Lower leg skin (tissue), 4 donors: ENCODE measurements at regions of chr7 and their contacts with region 1.

Region 1: DNA sequence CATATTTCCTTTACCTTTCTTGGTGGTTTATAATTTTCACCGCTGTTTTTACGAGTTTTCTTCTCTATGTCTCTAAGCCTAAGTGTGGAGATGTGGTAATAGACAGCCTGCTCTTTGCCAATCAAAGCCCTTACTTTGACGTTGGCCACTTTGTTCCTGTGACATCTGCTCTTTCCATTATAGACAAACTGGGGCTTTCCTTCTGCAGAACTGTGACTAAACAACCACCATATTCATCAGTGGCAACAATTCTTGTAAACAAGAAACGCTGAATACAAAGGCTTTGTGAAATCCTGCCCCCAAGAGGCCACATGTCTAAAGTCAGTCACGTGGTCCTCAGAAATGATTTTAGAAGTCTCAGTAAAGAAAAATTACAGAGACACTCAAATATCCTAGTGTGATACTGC is 59.6 kb upstream of the CAPZA2 start:
- DNase-seq: no peak
- H3K4me3 ChIP-seq: no peak overlapping the region
- CTCF ChIP-seq: no peak
- POLR2A ChIP-seq: no peak

Region 2: DNA sequence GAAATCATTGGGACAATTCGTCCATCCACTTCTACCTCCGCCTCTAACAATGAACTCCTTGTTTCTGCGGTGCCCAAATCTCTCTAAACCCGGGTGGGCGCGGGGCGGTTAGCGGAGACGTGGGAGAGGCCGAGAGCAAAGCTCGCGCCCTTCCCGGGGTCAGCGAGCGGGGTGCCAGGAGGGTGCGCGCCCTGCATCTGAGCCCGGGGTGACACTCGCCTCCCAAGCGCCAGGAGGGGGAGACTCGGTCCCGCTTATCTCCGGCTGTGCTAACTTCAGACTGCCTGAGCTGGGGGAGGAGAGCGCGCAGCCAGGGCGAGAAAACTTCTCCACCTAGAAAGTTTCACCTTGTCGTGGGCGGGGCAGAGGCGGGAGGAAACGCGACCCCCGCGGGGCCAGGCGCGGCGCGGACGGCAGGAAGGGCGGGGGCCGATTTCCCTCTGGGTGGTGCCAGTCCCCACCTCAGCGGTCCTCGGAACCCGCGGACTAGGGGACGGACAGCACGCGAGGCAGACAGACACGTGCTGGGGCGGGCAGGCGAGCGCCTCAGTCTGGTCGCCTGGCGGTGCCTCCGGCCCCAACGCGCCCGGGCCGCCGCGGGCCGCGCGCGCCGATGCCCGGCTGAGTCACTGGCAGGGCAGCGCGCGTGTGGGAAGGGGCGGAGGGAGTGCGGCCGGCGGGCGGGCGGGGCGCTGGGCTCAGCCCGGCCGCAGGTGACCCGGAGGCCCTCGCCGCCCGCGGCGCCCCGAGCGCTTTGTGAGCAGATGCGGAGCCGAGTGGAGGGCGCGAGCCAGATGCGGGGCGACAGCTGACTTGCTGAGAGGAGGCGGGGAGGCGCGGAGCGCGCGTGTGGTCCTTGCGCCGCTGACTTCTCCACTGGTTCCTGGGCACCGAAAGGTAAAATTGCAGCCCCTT is 130.8 kb before region 1 on chr7 and contains the start of gene MET:
- intact Hi-C with region 1: loop called (anchors 5 kb)
- DNase-seq: peak; percentile 75 to 95
- H3K4me3 ChIP-seq: peak within 1 kb of the TSS; percentile 47
- CTCF ChIP-seq: peak in 1 of 3 donors; percentile 11
- POLR2A ChIP-seq: no peak
- total RNA-seq, gene MET: 15.8 to 28.2 (median 24.5) TPM

Region 3: DNA sequence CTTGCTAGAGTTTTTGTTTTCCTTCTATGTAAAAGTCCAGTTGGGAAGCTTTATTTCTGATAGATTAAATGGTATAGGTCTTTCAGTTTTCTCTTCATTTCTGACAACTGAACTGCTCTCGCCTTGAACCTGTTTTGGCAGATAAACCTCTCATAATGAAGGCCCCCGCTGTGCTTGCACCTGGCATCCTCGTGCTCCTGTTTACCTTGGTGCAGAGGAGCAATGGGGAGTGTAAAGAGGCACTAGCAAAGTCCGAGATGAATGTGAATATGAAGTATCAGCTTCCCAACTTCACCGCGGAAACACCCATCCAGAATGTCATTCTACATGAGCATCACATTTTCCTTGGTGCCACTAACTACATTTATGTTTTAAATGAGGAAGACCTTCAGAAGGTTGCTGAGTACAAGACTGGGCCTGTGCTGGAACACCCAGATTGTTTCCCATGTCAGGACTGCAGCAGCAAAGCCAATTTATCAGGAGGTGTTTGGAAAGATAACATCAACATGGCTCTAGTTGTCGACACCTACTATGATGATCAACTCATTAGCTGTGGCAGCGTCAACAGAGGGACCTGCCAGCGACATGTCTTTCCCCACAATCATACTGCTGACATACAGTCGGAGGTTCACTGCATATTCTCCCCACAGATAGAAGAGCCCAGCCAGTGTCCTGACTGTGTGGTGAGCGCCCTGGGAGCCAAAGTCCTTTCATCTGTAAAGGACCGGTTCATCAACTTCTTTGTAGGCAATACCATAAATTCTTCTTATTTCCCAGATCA is 103.6 kb before region 1 on chr7:
- intact Hi-C with region 1: no loop called
- DNase-seq: no peak
- H3K4me3 ChIP-seq: no peak overlapping the region
- CTCF ChIP-seq: no peak
- POLR2A ChIP-seq: no peak